Common myeloid progenitor, CD34-positive (primary cell): ENCODE measurements at regions of chr11 and their contacts with region 1.

Region 1: GRCh38 chr11:118060869-118061268 is 16.0 kb upstream of the TMPRSS4 start:
- DNase-seq: peak in 2 of 3 donors; percentile 26 to 45
- H3K4me3 ChIP-seq: no peak overlapping the region
- H3K27ac ChIP-seq: no peak overlapping the region
- H3K4me1 ChIP-seq: peaks cover 0 to 33% (median 2%) of the 10 kb centered on the region in 4 experiments
- H3K27me3 ChIP-seq: no peaks in the 10 kb centered on the region

Region 2: GRCh38 chr11:118002541-118003423 is 58.1 kb before region 1 on chr11:
- CTCF ChIA-PET with region 1: no interaction called
- POLR2A ChIA-PET with region 1: no interaction called
- DNase-seq: peak in 2 of 3 donors; percentile 50 to 70
- H3K4me3 ChIP-seq: peak overlapping the region in 1 of 7 experiments; percentile 36
- H3K27ac ChIP-seq: peak overlapping the region in 1 of 2 experiments; percentile 70
- H3K4me1 ChIP-seq: peaks cover 5 to 52% (median 36%) of the 10 kb centered on the region in 4 experiments
- H3K27me3 ChIP-seq: no peaks in the 10 kb centered on the region

Region 3: DNA sequence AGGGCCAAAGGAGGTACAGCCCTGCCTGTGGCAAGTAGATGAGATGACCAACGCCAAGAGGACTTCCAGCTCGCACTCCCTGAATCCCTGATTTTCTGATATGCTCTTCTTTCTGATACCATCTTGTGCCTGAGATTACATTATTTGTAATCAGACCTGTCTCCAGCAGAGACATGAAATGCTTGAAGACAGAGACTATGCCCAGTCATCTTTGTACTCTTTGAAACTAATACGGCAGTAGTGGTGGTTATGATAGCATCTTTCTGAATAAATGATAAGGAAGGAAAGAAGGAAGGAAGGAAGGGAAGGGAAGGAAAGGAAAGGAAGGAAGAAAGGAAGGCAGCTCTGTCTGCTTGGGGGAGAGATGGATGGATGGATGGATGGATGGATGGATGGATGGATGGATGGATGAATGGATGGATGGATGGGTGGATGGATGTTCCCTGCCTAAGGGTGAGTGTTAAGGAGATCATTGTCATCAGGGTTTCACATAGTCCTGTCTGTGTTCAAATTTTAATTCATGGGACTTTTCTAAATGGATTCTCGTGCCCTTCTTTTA is 46.8 kb before region 1 on chr11:
- CTCF ChIA-PET with region 1: no interaction called
- POLR2A ChIA-PET with region 1: no interaction called
- DNase-seq: no peak
- H3K4me3 ChIP-seq: no peak overlapping the region
- H3K27ac ChIP-seq: no peak overlapping the region
- H3K4me1 ChIP-seq: peaks cover 13 to 79% (median 70%) of the 10 kb centered on the region in 4 experiments
- H3K27me3 ChIP-seq: no peaks in the 10 kb centered on the region

Region 4: DNA sequence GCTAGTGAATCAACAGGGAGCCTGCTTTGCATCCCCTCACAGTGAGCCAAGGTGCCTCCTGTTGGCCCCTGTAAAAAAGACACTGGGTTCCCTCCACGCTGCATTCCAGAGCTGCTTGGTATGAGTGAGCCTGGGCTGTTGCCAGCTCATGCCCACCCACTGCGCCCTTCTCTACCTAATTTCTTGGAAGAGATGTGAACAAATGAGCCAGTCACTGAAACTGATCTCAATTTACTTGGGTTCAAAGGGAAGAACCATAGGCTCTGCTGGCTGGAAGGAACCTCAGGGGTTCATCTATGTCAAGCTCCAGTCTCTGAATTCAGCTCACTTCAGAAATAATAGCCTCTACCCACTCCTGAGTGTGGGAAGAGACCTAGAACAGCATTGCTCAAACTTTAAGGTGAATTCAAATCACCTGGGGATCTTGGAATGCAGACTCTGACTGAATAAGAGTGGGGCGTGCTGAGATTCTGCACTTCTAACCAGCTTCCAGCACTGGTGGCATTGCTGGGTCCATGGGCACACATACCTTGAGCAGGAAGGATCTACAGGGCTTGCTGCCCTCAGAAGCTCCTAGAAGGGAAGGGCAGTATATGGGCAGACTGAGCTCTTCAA is 10.7 kb after region 1 on chr11:
- CTCF ChIA-PET with region 1: interaction called, 10 read pairs
- POLR2A ChIA-PET with region 1: no interaction called
- DNase-seq: no peak
- H3K4me3 ChIP-seq: no peak overlapping the region
- H3K27ac ChIP-seq: no peak overlapping the region
- H3K4me1 ChIP-seq: peaks cover 0 to 5% (median 0%) of the 10 kb centered on the region in 4 experiments
- H3K27me3 ChIP-seq: no peaks in the 10 kb centered on the region

Region 5: GRCh38 chr11:118145285-118146227 is 84.7 kb after region 1 on chr11:
- CTCF ChIA-PET with region 1: no interaction called
- POLR2A ChIA-PET with region 1: no interaction called
- DNase-seq: peak; percentile 73 to 83 (median 79)
- H3K4me3 ChIP-seq: peak overlapping the region; percentile 60 to 85 (median 70)
- H3K27ac ChIP-seq: no peak overlapping the region
- H3K4me1 ChIP-seq: peaks cover 3 to 21% (median 6%) of the 10 kb centered on the region in 4 experiments
- H3K27me3 ChIP-seq: peaks cover 0 to 12% (median 0%) of the 10 kb centered on the region in 5 experiments